Endothelial cell of umbilical vein (primary cell): ENCODE measurements at regions of chr2 and their contacts with region 1.

Region 1: DNA sequence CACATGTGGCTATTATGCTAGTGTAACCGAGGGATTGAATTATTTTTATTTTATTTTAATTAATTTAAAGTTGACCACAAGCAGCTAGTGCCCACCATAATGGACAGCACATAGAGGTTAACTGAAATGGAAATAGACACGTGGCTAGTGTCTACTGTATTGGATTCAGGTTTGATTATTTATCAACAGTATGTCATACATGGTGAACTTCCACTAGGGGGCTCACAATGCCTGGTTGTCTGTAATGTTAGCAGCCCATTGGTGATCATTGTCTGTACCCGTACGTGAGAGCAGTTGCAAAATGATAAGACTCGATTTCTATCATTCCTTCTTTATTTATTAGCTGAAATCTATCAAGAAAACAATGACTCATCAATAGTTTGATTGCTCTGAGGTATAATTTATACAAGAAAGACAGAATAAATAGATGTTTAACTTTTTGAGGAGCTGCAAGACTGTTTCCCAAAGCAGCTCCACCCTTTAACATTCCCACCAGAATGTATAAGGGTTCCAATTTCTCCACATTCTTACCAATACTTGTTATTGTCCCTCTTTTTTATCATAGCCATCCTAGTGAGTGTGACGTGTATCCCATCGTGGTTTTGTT is 76.5 kb downstream of the CYBRD1 start:
- DNase-seq: peak; percentile 58
- H3K4me3 ChIP-seq: no peak overlapping the region
- H3K27ac ChIP-seq: no peak overlapping the region
- H3K4me1 ChIP-seq: no peaks in the 10 kb centered on the region
- H3K27me3 ChIP-seq: peaks cover 9 to 12% of the 10 kb centered on the region in 2 experiments
- CTCF ChIP-seq: peak; percentile 67 to 70
- POLR2A ChIP-seq: no peak

Region 2: GRCh38 chr2:171610824-171611223 is 12.0 kb after region 1 on chr2:
- CTCF ChIA-PET with region 1: interaction called, 14 read pairs
- POLR2A ChIA-PET with region 1: no interaction called
- dilution Hi-C with region 1: no loop called
- intact Hi-C with region 1: no loop called
- DNase-seq: no peak
- H3K4me3 ChIP-seq: no peak overlapping the region
- H3K27ac ChIP-seq: no peak overlapping the region
- H3K4me1 ChIP-seq: no peaks in the 10 kb centered on the region
- H3K27me3 ChIP-seq: peaks cover 2% of the 10 kb centered on the region in 2 experiments
- CTCF ChIP-seq: no peak
- POLR2A ChIP-seq: no peak

Region 3: GRCh38 chr2:172113617-172114016 is 514.8 kb after region 1 on chr2:
- CTCF ChIA-PET with region 1: interaction called, 14 read pairs
- POLR2A ChIA-PET with region 1: no interaction called
- dilution Hi-C with region 1: no loop called
- intact Hi-C with region 1: loop called (anchors 1 kb)
- DNase-seq: peak; percentile 42
- H3K4me3 ChIP-seq: no peak overlapping the region
- H3K27ac ChIP-seq: no peak overlapping the region
- H3K4me1 ChIP-seq: peaks cover under 1% of the 10 kb centered on the region
- H3K27me3 ChIP-seq: no peaks in the 10 kb centered on the region
- CTCF ChIP-seq: no peak
- POLR2A ChIP-seq: no peak